Gastrocnemius medialis (tissue), 4 donors: ENCODE measurements at regions of chr9 and their contacts with region 1.

Region 1: DNA sequence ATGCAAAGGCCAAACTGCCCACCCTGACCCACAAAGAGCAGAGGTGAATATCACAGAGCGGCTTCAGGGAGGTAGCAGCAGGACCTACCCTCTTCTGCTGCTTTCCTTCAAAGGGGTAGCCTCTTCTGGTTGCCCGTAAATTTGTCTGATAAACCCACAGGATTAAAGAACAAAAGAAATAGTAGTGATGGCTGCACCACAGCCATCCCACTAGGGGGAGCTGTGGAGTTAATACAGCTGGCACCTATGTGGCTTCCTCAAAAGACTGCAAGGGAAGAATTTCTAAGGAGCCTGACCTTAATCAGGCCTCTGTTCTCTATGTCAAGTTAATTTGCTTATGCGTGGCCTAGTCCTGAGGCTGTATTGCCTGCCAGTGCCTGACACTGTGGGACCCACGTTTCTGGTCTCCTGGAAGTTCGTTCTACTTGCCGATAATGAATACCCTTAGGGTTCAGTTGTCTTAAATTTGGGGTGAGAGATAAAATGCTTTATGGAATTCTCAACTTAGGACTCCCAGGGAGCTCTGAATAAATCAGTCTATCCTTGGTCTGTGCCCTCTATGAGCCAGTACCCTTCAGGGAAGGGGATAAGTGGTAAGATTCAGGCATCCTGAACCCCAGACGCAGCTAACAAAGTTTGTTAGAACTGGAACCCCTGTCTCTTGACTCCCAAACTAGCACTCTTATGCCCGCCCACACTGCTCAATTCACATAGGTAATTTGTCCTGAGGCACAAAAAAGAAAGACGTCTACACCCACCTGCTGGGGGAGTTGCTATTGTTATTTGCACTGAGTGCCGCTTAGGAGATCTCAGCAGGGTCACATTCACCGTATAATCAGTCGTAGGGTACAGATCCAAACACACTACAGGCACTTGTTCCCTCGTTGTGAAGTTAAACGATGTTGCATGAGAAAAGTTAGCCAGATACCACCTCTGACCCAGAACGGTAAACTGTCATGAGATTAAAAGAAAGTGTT is 77.1 kb downstream of the SUSD1 start:
- DNase-seq: peak in 1 of 2 donors; percentile 11
- ATAC-seq: peak in 1 of 2 donors; percentile 64
- H3K4me3 ChIP-seq: no peak overlapping the region
- H3K27ac ChIP-seq: no peak overlapping the region
- H3K4me1 ChIP-seq: peaks cover 0 to 5% of the 10 kb centered on the region in 2 donors
- H3K27me3 ChIP-seq: no peaks in the 10 kb centered on the region
- CTCF ChIP-seq: peak; percentile 57 to 81 (median 70)
- POLR2A ChIP-seq: no peak

Region 2: GRCh38 chr9:111597817-111598729 is 499.9 kb before region 1 on chr9:
- in situ Hi-C with region 1: loop called in 1 of 4 experiments (anchors 25 kb)
- intact Hi-C with region 1: no loop called
- DNase-seq: peak; percentile 35 to 54
- ATAC-seq: peak; percentile 61 to 62
- H3K4me3 ChIP-seq: peak overlapping the region; percentile 66 to 89 (median 80)
- H3K27ac ChIP-seq: peak overlapping the region; percentile 69 to 81 (median 78)
- H3K4me1 ChIP-seq: peaks cover 0 to 9% of the 10 kb centered on the region in 2 donors
- H3K27me3 ChIP-seq: no peaks in the 10 kb centered on the region
- CTCF ChIP-seq: peak; percentile 10 to 63 (median 40)
- POLR2A ChIP-seq: no peak

Region 3: GRCh38 chr9:112333639-112334431 is 235.8 kb after region 1 on chr9:
- in situ Hi-C with region 1: no loop called
- intact Hi-C with region 1: loop called (anchors 10 kb)
- DNase-seq: peak; percentile 84 to 91
- ATAC-seq: peak; percentile 89
- H3K4me3 ChIP-seq: peak overlapping the region; percentile 67 to 96 (median 88)
- H3K27ac ChIP-seq: peak overlapping the region; percentile 84 to 99 (median 97)
- H3K4me1 ChIP-seq: peaks cover 9 to 16% of the 10 kb centered on the region in 2 donors
- H3K27me3 ChIP-seq: no peaks in the 10 kb centered on the region
- CTCF ChIP-seq: peak; percentile 45 to 78 (median 57)
- POLR2A ChIP-seq: no peak

Region 4: GRCh38 chr9:112361601-112362000 is 263.6 kb after region 1 on chr9:
- in situ Hi-C with region 1: loop called (anchors 5 to 10 kb)
- intact Hi-C with region 1: loop called (anchors 2 kb)
- DNase-seq: no peak
- ATAC-seq: peak in 1 of 2 donors; percentile 26
- H3K4me3 ChIP-seq: no peak overlapping the region
- H3K27ac ChIP-seq: no peak overlapping the region
- H3K4me1 ChIP-seq: no peaks in the 10 kb centered on the region
- H3K27me3 ChIP-seq: no peaks in the 10 kb centered on the region
- CTCF ChIP-seq: peak; percentile 48 to 65 (median 59)
- POLR2A ChIP-seq: no peak

Region 5: GRCh38 chr9:112819635-112820496 is 721.9 kb after region 1 on chr9:
- in situ Hi-C with region 1: loop called in 2 of 4 experiments (anchors 25 kb)
- intact Hi-C with region 1: no loop called
- DNase-seq: peak; percentile 50 to 76
- ATAC-seq: peak; percentile 97 to 99
- H3K4me3 ChIP-seq: no peak overlapping the region
- H3K27ac ChIP-seq: peak overlapping the region in 3 of 4 donors; percentile 26 to 50 (median 47)
- H3K4me1 ChIP-seq: peaks cover 3 to 5% of the 10 kb centered on the region in 2 donors
- H3K27me3 ChIP-seq: no peaks in the 10 kb centered on the region
- CTCF ChIP-seq: peak; percentile 55 to 78 (median 70)
- POLR2A ChIP-seq: no peak